Mammary epithelial cell (primary cell): ENCODE measurements at regions of chr1 and their contacts with region 1.

Region 1: GRCh38 chr1:235597867-235598553 is 51.6 kb downstream of the GNG4 start:
- DNase-seq: peak; percentile 32
- H3K4me3 ChIP-seq: no peak overlapping the region
- H3K27ac ChIP-seq: no peak overlapping the region
- H3K4me1 ChIP-seq: no peaks in the 10 kb centered on the region
- H3K27me3 ChIP-seq: no peaks in the 10 kb centered on the region
- CTCF ChIP-seq: peak; percentile 43 to 45

Region 2: GRCh38 chr1:235527196-235527814 is 70.7 kb before region 1 on chr1:
- CTCF ChIA-PET with region 1: interaction called, 3 read pairs
- dilution Hi-C with region 1: loop called (anchors 5 kb)
- in situ Hi-C with region 1: no loop called
- intact Hi-C with region 1: no loop called
- DNase-seq: no peak
- H3K4me3 ChIP-seq: no peak overlapping the region
- H3K27ac ChIP-seq: no peak overlapping the region
- H3K4me1 ChIP-seq: peaks cover 9% of the 10 kb centered on the region
- H3K27me3 ChIP-seq: no peaks in the 10 kb centered on the region
- CTCF ChIP-seq: no peak

Region 3: GRCh38 chr1:235632506-235633401 is 34.7 kb after region 1 on chr1:
- CTCF ChIA-PET with region 1: no interaction called
- dilution Hi-C with region 1: loop called (anchors 5 kb)
- in situ Hi-C with region 1: no loop called
- intact Hi-C with region 1: no loop called
- DNase-seq: peak; percentile 26
- H3K4me3 ChIP-seq: peak overlapping the region in 2 of 3 experiments; percentile 26 to 29
- H3K27ac ChIP-seq: no peak overlapping the region
- H3K4me1 ChIP-seq: peaks cover 4% of the 10 kb centered on the region
- H3K27me3 ChIP-seq: no peaks in the 10 kb centered on the region
- CTCF ChIP-seq: no peak

Region 4: GRCh38 chr1:235783148-235783776 is 185.3 kb after region 1 on chr1:
- CTCF ChIA-PET with region 1: no interaction called
- dilution Hi-C with region 1: no loop called
- in situ Hi-C with region 1: no loop called
- intact Hi-C with region 1: loop called (anchors 1 kb)
- DNase-seq: peak; percentile 21
- H3K4me3 ChIP-seq: no peak overlapping the region
- H3K27ac ChIP-seq: no peak overlapping the region
- H3K4me1 ChIP-seq: peaks cover 4% of the 10 kb centered on the region
- H3K27me3 ChIP-seq: no peaks in the 10 kb centered on the region
- CTCF ChIP-seq: peak; percentile 21 to 42

Region 5: DNA sequence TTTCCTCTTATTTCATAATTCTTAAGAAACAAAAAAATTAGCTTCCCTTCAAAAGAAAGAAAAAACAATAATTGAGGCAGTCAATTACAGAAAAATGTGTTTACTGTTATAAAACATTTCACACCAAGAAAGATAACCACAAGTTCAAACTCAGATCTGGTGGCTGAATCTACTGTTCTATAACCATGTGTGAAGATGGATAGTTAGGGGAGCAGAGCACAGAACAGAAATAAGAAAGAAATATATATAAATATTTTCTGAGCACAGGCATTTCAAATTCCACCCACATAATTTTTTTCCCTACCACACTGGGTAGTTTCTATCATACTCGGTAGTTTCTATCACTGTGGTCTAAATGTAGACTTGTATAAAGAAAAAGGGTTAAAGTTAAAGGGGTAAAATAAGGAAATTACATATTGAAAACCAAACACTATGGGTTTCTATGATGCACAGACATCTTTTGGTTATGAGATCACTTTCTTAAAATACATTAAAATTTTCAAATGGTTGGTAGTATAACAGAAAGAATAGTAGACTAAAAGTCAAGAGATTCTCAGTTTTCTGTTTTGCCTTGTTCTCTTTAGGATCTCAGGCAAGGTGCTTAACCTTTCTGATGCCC is 257.9 kb after region 1 on chr1:
- CTCF ChIA-PET with region 1: interaction called, 11 read pairs
- dilution Hi-C with region 1: no loop called
- in situ Hi-C with region 1: no loop called
- intact Hi-C with region 1: no loop called
- DNase-seq: no peak
- H3K4me3 ChIP-seq: no peak overlapping the region
- H3K27ac ChIP-seq: no peak overlapping the region
- H3K4me1 ChIP-seq: no peaks in the 10 kb centered on the region
- H3K27me3 ChIP-seq: no peaks in the 10 kb centered on the region
- CTCF ChIP-seq: no peak